ENCODE measurements at regions of chr12 and their contacts with region 1.

Region 1: DNA sequence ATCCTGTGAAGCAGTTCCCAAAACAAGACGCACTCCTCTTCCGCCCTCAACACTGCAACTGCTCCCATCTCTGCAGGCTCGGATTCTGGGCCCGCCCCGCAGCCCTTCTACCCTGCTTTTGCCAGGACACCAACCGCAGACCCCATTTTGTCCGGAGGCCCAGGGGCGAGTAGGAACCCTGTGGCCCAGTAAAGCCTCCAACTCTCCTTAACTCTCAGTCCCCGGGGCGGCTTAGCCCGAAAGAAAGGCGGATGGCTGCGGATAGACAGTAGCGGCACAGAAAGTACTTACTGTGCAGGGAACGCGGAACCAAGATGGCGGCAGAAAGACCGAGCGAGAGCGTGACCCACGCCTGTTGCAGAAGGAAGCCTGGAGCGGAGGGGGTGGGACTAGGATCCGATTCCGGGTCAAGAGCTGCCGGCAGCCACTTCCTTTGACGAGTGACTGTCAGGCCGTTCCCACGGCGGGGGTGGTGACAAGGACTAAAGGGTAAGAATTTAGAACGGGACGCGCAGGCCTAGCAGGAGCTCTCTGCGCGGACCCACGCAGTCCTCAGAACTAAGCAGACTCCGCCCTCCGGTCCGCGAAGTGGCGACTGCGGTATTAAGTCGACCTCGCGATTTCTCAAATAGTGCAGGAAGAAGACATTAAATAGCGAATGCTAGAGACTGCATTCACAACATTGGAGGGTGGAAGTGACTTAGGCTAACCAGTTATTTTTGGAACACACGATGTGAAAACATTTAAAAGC is at the start of gene NACA:
- DNase-seq: peak; percentile 98 to 100 (median 99)
- H3K4me3 ChIP-seq: peak within 1 kb of the TSS; percentile 55 to 100 (median 89)
- H3K27ac ChIP-seq: peak within 1 kb of the TSS; percentile 82 to 99 (median 96)
- H3K27me3 ChIP-seq: no peaks in the 10 kb centered on the region
- CTCF ChIP-seq: peak in 28 of 56 donors; percentile 6 to 53 (median 26)
- total RNA-seq, gene NACA: 265 to 487 (median 373) TPM

Region 2: DNA sequence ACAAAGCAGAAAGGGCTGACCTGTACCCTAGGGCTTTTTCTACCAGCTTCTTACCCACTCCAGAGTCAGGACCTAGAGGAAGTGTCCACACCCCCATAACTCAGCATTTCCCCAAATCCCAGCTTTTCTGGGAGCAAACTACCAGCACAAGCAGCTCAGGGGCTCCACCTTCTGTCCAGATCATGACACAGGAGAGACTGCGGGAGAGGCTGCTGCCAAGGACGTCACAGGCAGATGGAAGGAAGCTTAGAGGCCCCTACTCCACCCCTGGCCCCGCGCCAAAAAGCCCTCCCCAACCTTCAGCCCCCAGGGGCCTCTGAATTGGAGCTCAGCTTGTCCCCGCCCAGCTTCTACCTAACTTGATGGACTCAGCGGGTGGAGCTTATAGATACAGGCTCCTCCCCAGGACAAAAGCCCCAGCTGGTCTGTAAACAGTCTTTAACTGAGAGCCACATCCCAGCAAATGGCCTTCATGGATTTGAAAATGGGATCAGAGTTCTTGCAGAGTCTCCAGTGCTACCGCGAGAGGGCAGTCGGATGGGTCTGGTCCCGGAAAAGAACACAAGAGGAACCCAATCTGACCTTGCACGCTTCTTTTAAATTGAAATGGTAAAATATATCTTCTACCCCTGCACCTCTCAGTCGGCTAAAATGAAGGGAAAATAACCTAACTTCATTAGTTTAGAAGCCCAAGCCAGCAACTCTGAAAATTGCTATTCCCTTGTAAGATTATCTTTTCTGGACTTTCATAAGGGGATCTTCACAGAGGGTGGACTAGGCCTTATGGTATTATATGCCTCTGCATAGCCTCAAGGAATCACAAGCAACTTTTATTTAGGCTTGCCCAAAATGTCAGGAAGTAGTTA is 88.2 kb before region 1 on chr12:
- intact Hi-C with region 1: loop called (anchors 2 to 5 kb)
- DNase-seq: peak; percentile 83 to 98 (median 95)
- H3K4me3 ChIP-seq: peak overlapping the region; percentile 46 to 87 (median 78)
- H3K27ac ChIP-seq: peak overlapping the region; percentile 87 to 99 (median 95)
- H3K27me3 ChIP-seq: no peaks in the 10 kb centered on the region
- CTCF ChIP-seq: peak; percentile 32 to 90 (median 72)

Region 3: GRCh38 chr12:56645717-56646446 is 79.3 kb before region 1 on chr12 and contains the start of gene ATP5F1B:
- intact Hi-C with region 1: loop called in 1 of 2 experiments (anchors 1 kb)
- DNase-seq: peak; percentile 82 to 99 (median 96)
- H3K4me3 ChIP-seq: peak within 1 kb of the TSS; percentile 76 to 100 (median 97)
- H3K27ac ChIP-seq: peak within 1 kb of the TSS; percentile 66 to 99 (median 95)
- H3K27me3 ChIP-seq: no peaks in the 10 kb centered on the region
- CTCF ChIP-seq: peak in 33 of 56 donors; percentile 3 to 53 (median 22)
- total RNA-seq, gene ATP5F1B: 248 to 863 (median 546) TPM

Region 4: GRCh38 chr12:56688129-56688845 is 36.9 kb before region 1 on chr12 and contains the start of gene PTGES3:
- intact Hi-C with region 1: loop called (anchors 1 kb)
- DNase-seq: peak; percentile 86 to 96 (median 93)
- H3K4me3 ChIP-seq: peak within 1 kb of the TSS; percentile 65 to 100 (median 96)
- H3K27ac ChIP-seq: peak within 1 kb of the TSS; percentile 97 to 100 (median 100)
- H3K27me3 ChIP-seq: no peaks in the 10 kb centered on the region
- CTCF ChIP-seq: peak in 17 of 56 donors; percentile 4 to 40 (median 16)
- total RNA-seq, gene PTGES3: 109 to 354 (median 170) TPM

Region 5: GRCh38 chr12:56751712-56752598 is 26.8 kb after region 1 on chr12 and contains the start of gene PRIM1:
- intact Hi-C with region 1: loop called in 1 of 2 experiments (anchors 2 kb)
- DNase-seq: peak; percentile 78 to 90 (median 83)
- H3K4me3 ChIP-seq: peak within 1 kb of the TSS; percentile 58 to 97 (median 81)
- H3K27ac ChIP-seq: peak within 1 kb of the TSS in 54 of 59 donors; percentile 4 to 89 (median 62)
- H3K27me3 ChIP-seq: no peaks in the 10 kb centered on the region
- CTCF ChIP-seq: peak in 52 of 56 donors; percentile 31 to 67 (median 50)
- total RNA-seq, gene PRIM1: 5.5 to 17.4 (median 10.2) TPM

Region 6: GRCh38 chr12:56941299-56942017 is 216.3 kb after region 1 on chr12:
- intact Hi-C with region 1: no loop called
- DNase-seq: peak in 5 of 10 donors; percentile 24 to 67 (median 40)
- H3K4me3 ChIP-seq: no peak overlapping the region
- H3K27ac ChIP-seq: peak overlapping the region in 54 of 59 donors; percentile 4 to 89 (median 72)
- H3K27me3 ChIP-seq: no peaks in the 10 kb centered on the region
- CTCF ChIP-seq: no peak

Region 7: GRCh38 chr12:57005980-57006808 is 281.0 kb after region 1 on chr12 and contains the start of gene ZBTB39:
- intact Hi-C with region 1: no loop called
- DNase-seq: peak in 6 of 10 donors; percentile 28 to 72 (median 48)
- H3K4me3 ChIP-seq: peak within 1 kb of the TSS; percentile 47 to 94 (median 83)
- H3K27ac ChIP-seq: peak within 1 kb of the TSS in 51 of 59 donors; percentile 48 to 89 (median 76)
- H3K27me3 ChIP-seq: no peaks in the 10 kb centered on the region
- CTCF ChIP-seq: peak; percentile 31 to 77 (median 66)
- total RNA-seq, gene ZBTB39: 4.7 to 10.1 (median 7.0) TPM

Measured in dorsolateral prefrontal cortex (tissue), 120 donors.